ENCODE measurements at regions of chr19 and their contacts with region 1.

Region 1: GRCh38 chr19:14107581-14108461 is 9.7 kb downstream of the PRKACA start:
- DNase-seq: peak in 1 of 2 donors; percentile 87
- H3K4me3 ChIP-seq: peak overlapping the region in 1 of 2 donors; percentile 41
- H3K27ac ChIP-seq: peak overlapping the region; percentile 90
- H3K4me1 ChIP-seq: peaks cover 11 to 47% of the 10 kb centered on the region in 2 donors
- H3K27me3 ChIP-seq: no peaks in the 10 kb centered on the region
- CTCF ChIP-seq: no peak

Region 2: DNA sequence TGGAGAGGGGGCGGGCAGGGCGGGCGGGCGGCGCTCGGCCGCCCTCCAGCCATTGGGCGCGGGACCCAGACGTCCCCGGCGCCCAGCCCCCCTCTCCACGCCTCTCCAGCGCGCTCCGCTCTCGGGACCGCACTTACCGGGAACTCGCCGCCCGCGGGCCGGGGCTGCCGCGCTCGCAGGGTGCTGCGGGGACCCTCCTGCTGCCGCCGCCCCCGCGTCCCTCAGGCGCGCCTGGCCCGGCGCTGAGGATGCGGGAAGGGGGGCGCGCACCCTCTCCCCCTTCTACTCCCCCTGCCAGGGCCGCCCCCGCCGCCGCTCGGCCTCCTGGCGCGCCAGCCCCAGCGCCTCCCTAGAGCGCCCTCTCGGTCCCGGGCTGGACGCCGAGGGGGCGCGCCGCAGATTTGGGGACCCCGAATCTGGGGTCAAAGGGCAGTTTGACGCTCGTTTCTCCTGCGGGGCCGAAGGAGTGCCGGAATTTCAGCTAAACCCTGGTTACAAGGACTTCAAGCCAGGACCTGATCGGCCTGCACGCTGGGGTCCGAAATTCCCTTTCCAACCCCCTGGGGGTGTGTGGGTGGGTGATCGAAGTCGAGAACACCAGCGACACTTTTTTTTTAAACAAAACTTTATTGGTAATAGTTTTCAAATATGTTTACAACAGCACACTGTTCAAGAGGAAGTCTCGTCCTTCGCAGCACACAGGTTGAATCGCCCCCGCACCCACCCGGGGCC is 16.6 kb before region 1 on chr19:
- intact Hi-C with region 1: loop called (anchors 2 kb)
- DNase-seq: peak in 1 of 2 donors; percentile 77
- H3K4me3 ChIP-seq: peak overlapping the region; percentile 80 to 90
- H3K27ac ChIP-seq: peak overlapping the region; percentile 92 to 94
- H3K4me1 ChIP-seq: peaks cover 3 to 9% of the 10 kb centered on the region in 2 donors
- H3K27me3 ChIP-seq: no peaks in the 10 kb centered on the region
- CTCF ChIP-seq: peak; percentile 3 to 23 (median 13)